ENCODE measurements at regions of chr15 and their contacts with region 1.

Region 1: DNA sequence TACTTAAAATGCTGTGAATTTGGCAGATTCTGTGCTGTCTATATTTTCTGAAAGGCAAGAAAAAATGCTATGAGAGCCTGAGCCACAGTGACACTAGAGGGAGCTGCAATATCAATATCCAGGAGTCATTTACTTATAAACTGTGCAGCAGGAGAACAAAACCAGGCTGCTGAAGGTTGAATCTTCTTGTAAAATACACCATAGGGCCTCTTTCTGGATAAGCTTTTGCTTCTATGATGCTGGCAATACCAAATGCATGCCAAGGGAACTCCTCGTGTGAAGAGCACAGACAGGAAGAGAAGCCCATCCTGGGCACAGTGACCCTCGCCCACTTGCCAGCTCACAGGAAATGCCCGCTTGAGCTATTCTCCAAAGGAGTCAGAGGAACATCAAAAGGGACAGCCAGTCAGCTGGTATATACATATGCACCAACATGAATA is 48.0 kb upstream of the TSPAN3 start:
- DNase-seq: peak; percentile 54
- H3K4me3 ChIP-seq: no peak overlapping the region
- H3K27ac ChIP-seq: no peak overlapping the region
- H3K27me3 ChIP-seq: no peaks in the 10 kb centered on the region
- CTCF ChIP-seq: peak; percentile 82

Region 2: DNA sequence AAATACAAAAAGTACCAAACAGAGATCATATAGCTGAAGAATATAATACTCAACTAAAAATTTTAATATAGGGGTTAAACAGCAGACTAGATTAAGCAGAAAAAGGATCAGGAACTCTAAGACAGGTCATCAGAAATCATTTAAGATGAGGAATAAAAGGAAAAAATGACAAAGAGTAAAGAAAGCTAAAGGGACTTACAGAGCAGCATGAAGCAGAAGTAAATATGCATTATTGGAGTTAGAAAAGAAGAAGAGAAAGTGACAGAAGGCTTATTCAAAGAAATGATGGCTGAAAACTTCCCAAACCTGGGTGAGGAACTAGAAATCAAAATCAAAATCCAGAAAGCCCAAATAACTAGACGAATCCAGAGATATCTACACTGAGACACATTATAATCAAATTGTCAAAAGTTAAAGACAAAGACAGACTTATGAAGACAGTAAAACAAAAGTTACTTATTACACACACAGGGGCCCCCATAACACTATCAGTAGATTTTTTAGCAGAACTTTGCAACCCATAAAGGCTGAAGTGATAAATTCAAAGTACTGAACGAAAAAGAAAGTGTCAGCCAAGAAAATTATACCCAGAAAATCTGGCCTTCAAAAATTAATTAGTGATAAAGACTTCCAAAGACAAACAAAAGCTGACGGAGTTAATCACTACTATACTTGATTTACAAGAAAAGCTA is 309.3 kb before region 1 on chr15:
- CTCF ChIA-PET with region 1: no interaction called
- POLR2A ChIA-PET with region 1: no interaction called
- DNase-seq: no peak
- H3K4me3 ChIP-seq: no peak overlapping the region
- H3K27ac ChIP-seq: no peak overlapping the region
- H3K27me3 ChIP-seq: no peaks in the 10 kb centered on the region
- CTCF ChIP-seq: no peak

Region 3: DNA sequence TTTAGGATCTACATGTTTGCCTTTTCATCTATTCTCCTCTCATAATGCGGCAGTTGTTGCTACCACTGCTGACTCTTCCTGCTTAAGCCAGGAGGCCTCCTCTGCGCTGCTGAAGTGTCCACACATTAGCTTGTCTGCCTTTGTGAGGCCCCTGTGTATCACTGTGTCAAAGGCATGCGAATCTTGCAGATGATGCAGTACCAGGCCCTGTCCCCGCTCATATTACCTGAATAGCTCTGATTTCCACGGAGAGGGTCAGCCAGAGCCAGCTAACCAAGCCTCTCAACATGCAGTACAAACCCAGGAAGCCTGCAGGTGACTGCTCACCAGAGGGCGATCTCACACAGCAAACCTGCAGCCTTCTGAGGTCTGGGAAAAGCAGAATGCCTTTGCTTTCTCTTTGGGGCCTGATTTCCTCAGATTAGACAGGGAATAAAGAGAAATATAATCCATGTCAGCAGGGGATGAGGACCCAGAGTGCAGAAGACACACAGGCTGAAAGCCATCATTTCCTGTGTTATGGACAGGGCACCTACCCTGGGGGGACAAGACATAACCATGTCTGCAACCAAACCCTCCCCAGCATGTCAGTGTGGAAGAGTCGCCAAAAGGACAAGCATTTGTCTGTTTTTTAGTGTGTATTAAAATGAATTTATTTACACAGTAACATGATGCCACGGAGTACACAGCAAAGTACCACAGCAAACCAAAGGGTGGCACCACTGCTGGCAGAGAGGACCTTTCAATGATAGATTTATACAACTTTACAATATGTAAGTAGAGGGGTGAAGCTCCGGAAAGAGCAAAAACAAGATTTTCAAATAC is 11.2 kb before region 1 on chr15:
- CTCF ChIA-PET with region 1: interaction called, 13 read pairs
- POLR2A ChIA-PET with region 1: no interaction called
- DNase-seq: peak; percentile 27
- H3K4me3 ChIP-seq: no peak overlapping the region
- H3K27ac ChIP-seq: no peak overlapping the region
- H3K27me3 ChIP-seq: no peaks in the 10 kb centered on the region
- CTCF ChIP-seq: peak; percentile 79

Region 4: GRCh38 chr15:77144492-77145070 is 25.7 kb after region 1 on chr15:
- CTCF ChIA-PET with region 1: interaction called, 12 read pairs
- POLR2A ChIA-PET with region 1: no interaction called
- DNase-seq: peak; percentile 89
- H3K4me3 ChIP-seq: no peak overlapping the region
- H3K27ac ChIP-seq: peak overlapping the region; percentile 97
- H3K27me3 ChIP-seq: no peaks in the 10 kb centered on the region
- CTCF ChIP-seq: no peak